Gastrocnemius medialis (tissue), 4 donors: ENCODE measurements at regions of chr12 and their contacts with region 1.

Region 1: GRCh38 chr12:46661110-46661845 is 164.5 kb downstream of the SLC38A4 start:
- DNase-seq: no peak
- ATAC-seq: peak; percentile 67 to 68
- H3K4me3 ChIP-seq: peak overlapping the region in 1 of 4 donors; percentile 42
- H3K27ac ChIP-seq: peak overlapping the region; percentile 67 to 80 (median 74)
- H3K4me1 ChIP-seq: peaks cover 57 to 78% of the 10 kb centered on the region in 2 donors
- H3K27me3 ChIP-seq: no peaks in the 10 kb centered on the region
- CTCF ChIP-seq: peak; percentile 58 to 89 (median 72)
- POLR2A ChIP-seq: peak in 1 of 2 donors; percentile 9

Region 2: DNA sequence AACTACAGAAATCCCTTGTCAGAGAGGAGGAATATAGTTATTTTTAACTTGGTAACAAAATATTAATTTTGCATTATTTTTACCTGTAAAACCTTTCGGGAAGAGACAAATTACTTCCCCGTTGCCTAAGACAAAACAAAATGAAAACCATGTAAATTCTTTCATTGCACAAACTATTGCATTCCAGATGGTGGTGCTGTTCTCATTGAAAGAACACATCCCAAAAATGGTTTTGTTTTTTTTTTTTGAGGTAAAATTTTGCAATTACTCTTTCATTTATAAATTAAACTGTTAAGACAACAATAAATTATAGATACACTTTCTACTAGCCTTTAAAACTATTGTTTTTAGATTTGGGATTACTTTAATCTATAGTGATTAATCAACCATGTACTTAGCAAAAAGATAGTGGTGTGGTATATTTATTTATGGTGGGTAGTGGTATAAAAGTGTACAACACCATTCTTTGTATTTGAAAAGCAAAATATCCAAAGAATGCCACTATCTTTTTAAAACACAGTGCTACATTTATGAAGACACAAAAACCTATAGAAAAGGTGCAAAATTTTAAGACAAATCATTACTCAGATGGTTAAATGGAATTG is 507.9 kb before region 1 on chr12:
- in situ Hi-C with region 1: loop called in 2 of 4 experiments (anchors 25 kb)
- intact Hi-C with region 1: no loop called
- DNase-seq: no peak
- ATAC-seq: no peak
- H3K4me3 ChIP-seq: no peak overlapping the region
- H3K27ac ChIP-seq: no peak overlapping the region
- H3K4me1 ChIP-seq: no peaks in the 10 kb centered on the region
- H3K27me3 ChIP-seq: no peaks in the 10 kb centered on the region
- CTCF ChIP-seq: peak in 3 of 5 experiments; percentile 25 to 55 (median 48)
- POLR2A ChIP-seq: no peak

Region 3: DNA sequence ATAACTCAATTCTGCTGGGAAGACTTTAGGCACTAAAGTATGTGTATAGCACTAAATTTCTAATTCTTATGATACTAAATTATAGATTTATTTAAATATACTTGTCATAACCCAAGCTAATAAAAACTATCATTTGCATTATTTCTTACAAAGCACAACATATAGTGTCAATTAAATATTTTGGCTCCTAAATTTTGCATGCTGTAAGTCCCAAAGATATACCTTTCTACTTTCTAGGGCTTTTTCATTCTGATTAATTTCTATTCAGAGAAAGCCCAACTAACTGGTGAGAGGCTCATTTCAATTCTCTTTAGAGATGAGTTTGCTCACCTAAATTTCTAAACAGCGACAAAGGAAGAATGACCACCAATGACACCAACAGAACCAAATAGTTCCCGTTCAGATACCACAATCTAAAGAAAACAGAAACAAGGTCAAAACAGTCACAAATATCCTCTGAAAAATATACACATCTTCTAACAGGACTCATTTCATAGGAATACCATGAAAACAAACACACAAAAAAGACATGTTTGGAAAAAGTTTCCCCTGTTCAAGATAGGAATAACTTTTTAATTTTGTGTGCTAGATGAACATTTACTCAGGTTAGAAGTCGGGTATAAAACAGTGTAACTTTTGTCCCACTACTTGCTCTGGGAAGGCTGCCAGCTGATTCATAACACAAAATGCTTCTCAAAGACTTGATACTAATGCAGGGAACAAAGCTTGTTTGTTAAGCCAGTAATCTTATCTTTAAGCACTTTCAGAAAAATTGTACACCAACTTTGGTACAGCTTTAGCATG is 296.3 kb before region 1 on chr12:
- in situ Hi-C with region 1: loop called in 2 of 4 experiments (anchors 10 to 25 kb)
- intact Hi-C with region 1: loop called (anchors 2 kb)
- DNase-seq: peak; percentile 35 to 38
- ATAC-seq: no peak
- H3K4me3 ChIP-seq: peak overlapping the region in 3 of 4 donors; percentile 9 to 87 (median 68)
- H3K27ac ChIP-seq: peak overlapping the region; percentile 93 to 97 (median 95)
- H3K4me1 ChIP-seq: peaks cover 85 to 88% of the 10 kb centered on the region in 2 donors
- H3K27me3 ChIP-seq: no peaks in the 10 kb centered on the region
- CTCF ChIP-seq: no peak
- POLR2A ChIP-seq: no peak

Region 4: DNA sequence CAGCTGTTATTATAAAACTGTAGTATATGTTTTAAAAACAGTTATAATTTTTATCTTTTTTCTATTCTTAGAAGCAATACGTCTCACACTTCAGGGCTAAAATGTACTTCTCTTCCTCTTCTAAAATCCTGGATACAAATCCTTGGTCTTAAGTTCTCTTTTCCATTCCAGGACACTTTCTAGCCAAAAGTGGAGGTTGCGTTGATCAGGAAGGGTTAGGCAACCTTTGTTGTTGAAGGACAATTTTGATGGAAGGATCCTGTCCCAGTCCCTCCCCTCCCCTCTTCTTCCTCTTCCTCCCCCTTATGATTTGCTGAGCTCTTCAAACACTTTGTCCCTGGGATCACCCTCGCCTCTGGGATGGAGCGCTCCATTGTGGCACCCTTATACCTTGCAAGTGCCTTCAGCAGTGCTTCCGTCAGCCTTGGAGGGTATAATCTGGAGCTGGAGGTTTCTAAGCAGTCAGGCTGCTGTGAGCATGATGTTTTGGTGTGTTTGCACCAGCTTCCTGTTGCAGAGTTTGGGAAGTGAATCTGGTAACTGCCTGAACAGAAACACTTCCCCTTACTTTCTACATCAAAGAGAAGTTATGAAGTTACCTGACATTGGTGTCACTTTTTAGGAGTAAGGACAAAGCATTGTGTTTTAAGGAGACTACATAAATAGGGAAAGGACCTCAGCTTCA is 201.3 kb before region 1 on chr12:
- in situ Hi-C with region 1: no loop called
- intact Hi-C with region 1: loop called (anchors 5 kb)
- DNase-seq: no peak
- ATAC-seq: no peak
- H3K4me3 ChIP-seq: no peak overlapping the region
- H3K27ac ChIP-seq: peak overlapping the region; percentile 6 to 82 (median 44)
- H3K4me1 ChIP-seq: peaks cover 50 to 67% of the 10 kb centered on the region in 2 donors
- H3K27me3 ChIP-seq: no peaks in the 10 kb centered on the region
- CTCF ChIP-seq: no peak
- POLR2A ChIP-seq: no peak

Region 5: GRCh38 chr12:46562625-46563228 is 98.6 kb before region 1 on chr12:
- in situ Hi-C with region 1: no loop called
- intact Hi-C with region 1: loop called (anchors 5 kb)
- DNase-seq: no peak
- ATAC-seq: peak; percentile 62 to 67
- H3K4me3 ChIP-seq: peak overlapping the region in 2 of 4 donors; percentile 3 to 12
- H3K27ac ChIP-seq: peak overlapping the region; percentile 68 to 90 (median 80)
- H3K4me1 ChIP-seq: peaks cover 40 to 47% of the 10 kb centered on the region in 2 donors
- H3K27me3 ChIP-seq: no peaks in the 10 kb centered on the region
- CTCF ChIP-seq: no peak
- POLR2A ChIP-seq: no peak